Dorsolateral prefrontal cortex (tissue), 120 donors: ENCODE measurements at regions of chr6 and their contacts with region 1.

Region 1: GRCh38 chr6:13217206-13217905 is 111.0 kb downstream of the TBC1D7 start:
- DNase-seq: no peak
- H3K4me3 ChIP-seq: no peak overlapping the region
- H3K27ac ChIP-seq: peak overlapping the region in 3 of 59 donors; percentile 15 to 18 (median 16)
- H3K27me3 ChIP-seq: no peaks in the 10 kb centered on the region
- CTCF ChIP-seq: no peak

Region 2: DNA sequence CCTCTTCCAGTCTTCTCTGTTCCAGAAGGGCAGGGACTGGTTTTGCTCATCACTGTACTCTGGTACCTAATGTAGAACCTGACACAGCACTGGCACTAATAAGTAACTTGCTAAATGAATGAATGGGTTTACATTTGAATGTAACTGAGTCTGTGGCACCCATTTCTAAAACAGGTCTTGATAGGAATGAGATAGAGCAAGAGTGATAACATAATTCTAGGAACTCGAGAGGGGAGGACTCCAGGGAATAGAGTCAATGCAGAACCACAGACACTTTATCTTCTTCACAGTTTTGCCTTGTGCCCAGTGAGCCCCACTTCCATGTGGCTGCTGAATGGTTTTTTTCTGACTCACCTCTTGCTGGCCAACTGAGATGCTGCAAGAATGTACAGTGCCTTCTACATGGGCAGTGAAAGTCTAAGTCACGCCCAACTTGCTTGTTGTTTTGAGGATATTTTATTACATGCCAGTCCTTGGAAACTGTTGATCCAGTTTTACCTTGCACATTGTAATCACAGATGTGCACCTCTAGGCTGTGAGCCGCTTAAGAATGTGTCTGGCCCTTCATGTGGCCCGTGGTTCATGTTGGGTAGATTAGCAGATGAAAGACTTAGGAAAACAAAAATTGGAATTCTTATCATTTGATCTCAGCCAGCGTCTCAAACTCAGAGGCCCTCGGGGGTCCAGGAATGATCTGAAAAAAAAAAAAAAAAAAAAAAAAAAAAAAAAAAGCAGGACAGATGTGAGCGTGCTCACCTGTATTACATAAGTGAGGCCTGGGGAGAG is 50.0 kb after region 1 on chr6:
- intact Hi-C with region 1: loop called in 1 of 2 experiments (anchors 2 kb)
- DNase-seq: no peak
- H3K4me3 ChIP-seq: no peak overlapping the region
- H3K27ac ChIP-seq: peak overlapping the region in 10 of 59 donors; percentile 2 to 71 (median 46)
- H3K27me3 ChIP-seq: no peaks in the 10 kb centered on the region
- CTCF ChIP-seq: no peak